ENCODE measurements at regions of chr5 and their contacts with region 1.

Region 1: DNA sequence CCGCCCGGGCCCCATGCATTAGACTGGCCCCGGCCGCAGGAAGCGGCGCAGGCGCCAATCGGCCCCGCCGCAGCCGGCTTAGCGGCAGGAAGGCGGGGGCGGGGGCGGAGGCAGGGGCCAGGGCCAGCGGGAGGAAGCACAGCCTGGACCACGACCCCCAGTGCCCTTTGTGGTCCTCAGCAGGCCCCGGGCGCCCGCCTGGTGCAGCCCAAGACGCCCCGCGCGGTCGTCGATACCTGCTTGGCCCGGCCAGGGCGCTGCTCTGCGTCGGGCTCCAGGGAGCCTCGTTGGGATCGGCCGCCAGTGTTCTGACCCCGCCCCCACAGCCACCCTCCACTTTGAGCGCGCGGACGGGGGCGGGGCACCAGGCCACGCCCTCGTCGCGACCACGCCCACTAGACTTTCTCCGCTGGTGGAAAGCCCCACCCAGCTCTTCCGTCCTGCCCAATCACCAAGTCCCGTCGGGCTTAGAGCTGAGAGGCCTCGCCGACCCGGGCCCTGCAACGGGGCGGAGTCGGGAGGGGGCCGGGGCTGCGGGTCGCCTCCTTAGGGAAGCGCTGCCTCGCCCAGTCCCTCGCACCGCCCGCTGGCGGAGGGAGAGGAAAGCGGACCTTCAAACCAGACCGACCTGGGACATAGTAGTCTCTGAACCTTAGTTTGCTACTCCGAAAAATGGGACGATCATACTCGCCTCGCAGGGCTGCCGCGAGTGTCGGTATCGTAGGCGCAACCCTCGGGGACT is at the start of gene PDLIM7:
- DNase-seq: peak; percentile 98
- H3K4me3 ChIP-seq: peak within 1 kb of the TSS; percentile 83 to 94
- H3K27ac ChIP-seq: peak within 1 kb of the TSS; percentile 80 to 94
- H3K4me1 ChIP-seq: peaks cover 32 to 62% of the 10 kb centered on the region in 2 experiments; a peak in 3 of 4 replicates
- H3K27me3 ChIP-seq: no peaks in the 10 kb centered on the region
- CTCF ChIP-seq: no peak; the same call in 1 of the 2 replicates
- EP300 ChIP-seq: no peak
- RAD21 ChIP-seq: no peak
- polyA plus RNA-seq, gene PDLIM7: 183 and 206 TPM in 2 replicates

Region 2: GRCh38 chr5:177296581-177296980 is 200.9 kb before region 1 on chr5:
- CTCF ChIA-PET with region 1: no interaction called
- POLR2A ChIA-PET with region 1: no interaction called
- DNase-seq: no peak
- H3K4me3 ChIP-seq: no peak overlapping the region
- H3K27ac ChIP-seq: no peak overlapping the region; a peak in 1 of 4 replicates
- H3K4me1 ChIP-seq: peaks cover 0 to 4% of the 10 kb centered on the region in 2 experiments; a peak in 1 of 4 replicates
- H3K27me3 ChIP-seq: no peaks in the 10 kb centered on the region
- CTCF ChIP-seq: no peak
- EP300 ChIP-seq: no peak
- RAD21 ChIP-seq: no peak

Region 3: DNA sequence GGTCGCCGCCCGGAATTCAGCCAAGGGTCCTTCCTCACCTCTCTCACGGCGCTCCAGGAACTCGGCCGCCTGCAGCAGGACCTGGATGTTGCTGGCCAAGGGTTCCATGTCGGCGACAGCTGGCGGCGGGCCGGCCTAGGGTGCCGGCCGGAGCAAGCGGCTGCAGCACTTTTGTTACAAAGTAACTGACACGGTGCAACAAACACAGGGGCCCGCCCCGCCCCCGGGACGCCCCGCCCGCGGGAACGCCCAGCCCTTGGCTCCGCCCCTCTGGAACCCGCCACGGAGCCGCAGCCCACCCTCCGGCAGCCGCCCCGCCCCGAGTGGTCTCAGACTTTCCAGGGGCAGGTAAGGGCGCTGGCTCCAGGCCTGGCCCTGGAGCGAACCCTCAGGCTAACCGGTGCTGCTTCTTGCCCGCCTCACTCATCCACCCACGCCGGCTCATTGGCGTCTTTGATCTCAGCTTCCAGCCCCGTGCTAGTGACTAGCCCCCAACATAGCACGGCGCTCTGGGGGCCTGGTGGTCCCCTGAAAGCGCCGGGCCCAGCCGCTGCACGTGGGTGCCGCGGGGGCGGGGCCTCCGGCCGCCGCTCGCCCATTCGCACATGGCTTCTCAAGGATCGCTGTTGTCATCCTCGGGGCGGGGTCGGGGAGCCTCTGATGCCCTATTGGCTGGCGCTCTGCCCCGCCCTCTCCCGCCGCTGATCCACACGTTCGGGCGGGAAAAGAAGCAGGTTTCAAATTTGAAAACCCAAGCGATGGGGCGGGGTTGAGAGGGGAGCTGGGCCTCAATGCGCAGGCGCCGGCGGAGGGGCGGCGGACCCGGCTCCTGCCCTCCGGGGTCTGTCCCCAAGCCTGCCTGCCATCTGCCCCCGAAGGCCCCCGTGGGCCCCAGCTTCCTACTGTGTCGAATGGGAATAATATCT is 185.5 kb before region 1 on chr5 and contains the start of gene MXD3:
- CTCF ChIA-PET with region 1: interaction called, 11 read pairs
- POLR2A ChIA-PET with region 1: no interaction called
- DNase-seq: peak; percentile 97
- H3K4me3 ChIP-seq: peak within 1 kb of the TSS; percentile 59 to 84
- H3K27ac ChIP-seq: peak within 1 kb of the TSS; percentile 73 to 88
- H3K4me1 ChIP-seq: peaks cover 4 to 25% of the 10 kb centered on the region in 2 experiments; a peak in 1 of 4 replicates
- H3K27me3 ChIP-seq: no peaks in the 10 kb centered on the region
- CTCF ChIP-seq: no peak
- EP300 ChIP-seq: 0 out of 4 replicates have a peak, but pooled peaks of 1 of the 2 experiments have one; percentile 39
- RAD21 ChIP-seq: no peak
- polyA plus RNA-seq, gene MXD3: 22.6 and 23.1 TPM in 2 replicates

Region 4: DNA sequence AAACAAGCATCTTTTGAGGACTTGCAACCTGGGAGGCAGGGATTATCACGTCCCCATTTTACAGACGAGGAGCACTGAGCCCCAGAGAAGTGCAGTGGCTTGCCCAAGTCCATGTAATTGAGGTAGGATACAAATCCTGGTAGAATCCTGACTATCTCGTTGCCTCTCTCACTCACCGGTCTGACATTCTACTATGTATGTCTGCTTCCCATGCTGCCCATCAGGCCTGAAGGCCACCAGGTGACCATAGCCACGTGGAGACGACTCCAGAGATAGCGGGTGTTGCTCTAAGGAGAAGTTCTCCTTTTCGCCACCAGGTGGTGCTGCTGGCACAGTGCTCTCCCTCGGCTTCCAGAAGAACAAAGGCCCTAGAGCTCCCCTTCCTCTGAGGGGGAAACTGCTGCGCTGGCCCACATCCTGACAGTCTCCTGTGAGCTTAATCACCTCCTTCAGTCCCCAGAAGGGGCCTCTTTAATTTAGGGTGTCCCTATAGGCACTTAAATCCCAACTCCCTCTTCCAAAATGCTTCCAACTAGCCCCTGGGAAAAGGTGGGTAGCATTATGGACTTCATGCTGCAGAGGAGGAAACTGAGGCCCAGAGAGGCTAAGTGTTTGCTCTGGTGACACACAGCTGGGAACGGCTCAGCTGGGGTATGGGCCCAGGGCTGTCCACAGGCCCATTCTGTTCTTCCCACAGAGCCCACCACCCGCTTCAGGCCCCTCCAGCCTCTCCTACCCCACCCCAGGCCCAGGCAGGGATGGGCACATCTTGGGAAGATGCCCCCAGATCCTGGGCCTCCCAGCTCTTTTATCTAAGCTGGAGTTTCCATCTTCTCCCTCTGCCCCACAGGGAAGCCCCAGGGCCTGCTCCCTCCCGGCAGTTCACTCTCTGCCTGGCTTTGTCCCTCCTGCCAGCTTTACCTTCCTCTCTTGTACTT is 106.8 kb before region 1 on chr5:
- CTCF ChIA-PET with region 1: interaction called, 121 read pairs
- POLR2A ChIA-PET with region 1: interaction called, 5 read pairs
- DNase-seq: peak; percentile 95
- H3K4me3 ChIP-seq: no peak overlapping the region; a peak in 1 of 4 replicates
- H3K27ac ChIP-seq: no peak overlapping the region
- H3K4me1 ChIP-seq: peaks cover 0 to 3% of the 10 kb centered on the region in 2 experiments; a peak in 1 of 4 replicates
- H3K27me3 ChIP-seq: no peaks in the 10 kb centered on the region
- CTCF ChIP-seq: peak; percentile 88
- EP300 ChIP-seq: no peak
- RAD21 ChIP-seq: peak; percentile 95

Region 5: DNA sequence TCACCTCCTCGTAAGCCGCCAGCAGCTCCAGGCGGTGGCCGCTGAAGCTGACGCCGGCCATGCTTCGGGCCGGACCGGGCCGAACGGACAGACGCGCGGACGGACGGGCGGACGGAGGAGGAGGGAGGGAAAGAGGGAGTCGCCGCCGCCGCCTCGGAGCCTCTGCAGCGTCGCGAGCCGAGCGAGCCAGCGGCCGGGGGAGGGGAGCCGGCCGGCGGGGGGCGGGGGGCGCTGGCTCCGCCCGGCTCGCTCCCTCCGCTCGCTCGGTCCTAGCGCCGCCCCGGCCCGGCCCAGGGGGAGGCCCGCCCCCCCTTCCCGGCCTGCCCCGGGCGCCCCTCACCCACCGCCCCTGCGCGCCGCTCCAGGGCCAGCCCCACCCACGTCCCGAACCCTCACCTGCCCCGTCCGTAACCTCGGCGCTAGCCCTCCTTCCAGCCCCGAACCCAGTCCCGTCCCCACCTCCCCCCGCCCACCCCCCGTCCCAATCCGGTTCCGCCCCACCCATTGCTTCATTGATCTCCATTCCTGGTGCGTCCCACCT is 23.9 kb before region 1 on chr5 and contains the start of gene DBN1:
- CTCF ChIA-PET with region 1: interaction called, 201 read pairs
- POLR2A ChIA-PET with region 1: interaction called, 43 read pairs
- DNase-seq: peak; percentile 98
- H3K4me3 ChIP-seq: peak within 1 kb of the TSS; percentile 96
- H3K27ac ChIP-seq: peak within 1 kb of the TSS; percentile 52 to 92; a peak in 3 of 4 replicates
- H3K4me1 ChIP-seq: peaks cover 35 to 76% of the 10 kb centered on the region in 2 experiments; a peak in 3 of 4 replicates
- H3K27me3 ChIP-seq: no peaks in the 10 kb centered on the region
- CTCF ChIP-seq: no peak
- EP300 ChIP-seq: no peak
- RAD21 ChIP-seq: no peak
- polyA plus RNA-seq, gene DBN1: 176 and 244 TPM in 2 replicates

Region 6: GRCh38 chr5:177478711-177479646 is 18.5 kb before region 1 on chr5:
- CTCF ChIA-PET with region 1: interaction called, 201 read pairs
- POLR2A ChIA-PET with region 1: interaction called, 39 read pairs
- DNase-seq: peak; percentile 73
- H3K4me3 ChIP-seq: no peak overlapping the region
- H3K27ac ChIP-seq: peak overlapping the region; percentile 69 to 95; a peak in 3 of 4 replicates
- H3K4me1 ChIP-seq: peaks cover 6 to 84% of the 10 kb centered on the region in 2 experiments; a peak in 3 of 4 replicates
- H3K27me3 ChIP-seq: no peaks in the 10 kb centered on the region
- CTCF ChIP-seq: no peak
- EP300 ChIP-seq: peak in 1 of 2 experiments; percentile 7; a peak in 1 of 4 replicates
- RAD21 ChIP-seq: 0 out of 2 replicates have a peak, but pooled peaks have one; percentile 12

Region 7: DNA sequence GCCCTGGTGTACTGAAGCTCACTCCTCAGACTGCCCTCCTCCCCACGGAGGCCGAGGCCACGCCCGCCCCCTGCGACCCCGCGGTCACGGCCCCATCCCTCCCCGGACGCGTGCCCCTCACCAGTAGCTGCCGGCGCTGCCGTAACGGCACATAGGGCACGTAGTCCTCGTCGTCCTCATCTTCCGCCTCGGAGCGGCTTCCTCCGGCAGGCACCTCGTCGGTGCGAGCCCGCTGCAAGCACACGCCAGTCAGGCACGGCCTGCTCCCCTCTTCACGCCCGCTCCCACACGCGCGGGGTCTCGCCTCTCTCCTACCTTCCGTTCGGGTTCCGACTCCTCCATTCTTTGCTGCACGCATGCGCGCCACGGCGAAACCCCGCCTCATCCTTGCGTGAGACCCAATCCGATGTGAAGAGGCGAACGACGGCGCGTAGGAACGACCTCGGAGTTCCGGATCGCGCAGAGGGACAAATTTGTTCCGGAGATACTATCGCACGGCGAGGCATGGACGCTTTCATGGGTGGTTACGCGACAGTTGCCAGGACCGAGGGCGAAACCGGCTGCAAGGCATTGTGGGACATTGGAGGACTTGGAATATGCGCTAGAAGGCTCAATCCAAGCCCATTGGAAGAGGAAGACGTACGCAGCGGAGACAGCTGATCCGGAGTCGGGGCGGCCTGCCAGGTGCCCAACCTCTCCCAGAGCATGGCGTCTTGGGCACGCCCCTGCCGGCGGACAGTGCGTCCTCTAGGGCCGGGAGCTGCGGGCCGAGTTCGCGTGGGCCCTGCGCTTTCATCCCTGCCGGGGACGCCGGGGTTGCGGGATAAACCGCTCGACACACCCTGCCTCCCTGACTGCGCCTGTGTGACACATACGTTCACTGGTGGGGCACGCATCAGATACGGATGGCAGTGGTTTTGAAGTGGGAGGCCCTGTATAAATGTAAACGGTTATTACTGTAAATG is 19.4 kb after region 1 on chr5 and contains the start of gene DDX41:
- CTCF ChIA-PET with region 1: interaction called, 80 read pairs
- POLR2A ChIA-PET with region 1: interaction called, 7 read pairs
- DNase-seq: peak; percentile 98
- H3K4me3 ChIP-seq: peak within 1 kb of the TSS; percentile 79 to 99
- H3K27ac ChIP-seq: peak within 1 kb of the TSS; percentile 72 to 91
- H3K4me1 ChIP-seq: peaks cover 6 to 15% of the 10 kb centered on the region in 2 experiments; a peak in 2 of 4 replicates
- H3K27me3 ChIP-seq: no peaks in the 10 kb centered on the region
- CTCF ChIP-seq: 0 out of 2 replicates have a peak, but pooled peaks have one; percentile 20
- EP300 ChIP-seq: no peak; a peak in 2 of 4 replicates
- RAD21 ChIP-seq: no peak
- polyA plus RNA-seq, gene DDX41: 158 and 176 TPM in 2 replicates